Transverse colon (tissue), 4 donors: ENCODE measurements at regions of chr4 and their contacts with region 1.

Region 1: DNA sequence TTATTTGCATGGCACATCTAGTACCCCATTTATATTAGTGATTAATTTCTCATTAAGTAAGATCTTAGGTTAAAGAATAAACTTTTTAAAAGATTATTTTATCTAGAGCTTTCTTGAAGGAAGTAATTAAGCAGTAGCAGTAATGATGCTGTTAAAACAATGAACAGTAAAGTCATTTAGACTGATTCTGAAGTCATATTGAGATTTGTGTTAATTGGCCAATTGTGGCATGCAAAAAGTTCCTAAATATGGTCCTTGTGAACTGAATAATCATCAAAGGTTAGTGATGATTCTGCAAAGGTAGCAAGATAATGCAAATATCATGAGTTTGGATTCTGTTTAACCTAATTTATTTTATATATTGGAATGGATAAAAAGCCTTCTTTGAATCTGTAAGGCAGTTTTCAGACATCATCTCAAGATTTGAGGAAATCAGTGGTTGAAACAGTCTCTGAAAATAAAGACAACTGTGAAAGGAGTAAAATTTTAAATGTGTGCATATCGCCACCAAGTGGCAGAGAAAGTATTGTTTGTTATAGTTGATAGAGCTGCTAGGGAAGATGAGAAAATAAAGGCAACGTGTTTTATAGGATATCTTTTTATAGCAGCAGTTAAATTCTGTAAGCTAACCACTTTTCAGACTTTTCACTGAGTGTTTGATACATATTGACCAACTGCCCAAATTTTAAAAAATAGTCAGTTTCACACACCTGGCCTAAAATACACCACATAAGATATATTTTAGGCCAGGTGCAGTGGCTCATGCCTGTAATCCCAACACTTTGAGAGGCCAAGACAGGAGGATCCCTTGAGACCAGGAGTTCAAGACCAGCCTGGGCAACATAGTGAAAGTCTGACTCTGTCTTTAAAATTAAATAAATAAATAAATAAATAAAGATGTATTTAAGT is 79.6 kb downstream of the CCKAR start:
- DNase-seq: no peak
- H3K4me3 ChIP-seq: no peak overlapping the region
- H3K27ac ChIP-seq: peak overlapping the region in 1 of 4 donors; percentile 17
- H3K4me1 ChIP-seq: peaks cover 0 to 8% (median 1%) of the 10 kb centered on the region in 4 donors
- H3K27me3 ChIP-seq: no peaks in the 10 kb centered on the region
- CTCF ChIP-seq: peak; percentile 56 to 76 (median 58)
- EP300 ChIP-seq: no peak
- POLR2A ChIP-seq: no peak

Region 2: GRCh38 chr4:25993395-25994185 is 417.0 kb before region 1 on chr4:
- in situ Hi-C with region 1: loop called in 1 of 4 experiments (anchors 25 kb)
- intact Hi-C with region 1: loop called (anchors 10 kb)
- DNase-seq: peak; percentile 28
- H3K4me3 ChIP-seq: no peak overlapping the region
- H3K27ac ChIP-seq: no peak overlapping the region
- H3K4me1 ChIP-seq: no peaks in the 10 kb centered on the region
- H3K27me3 ChIP-seq: no peaks in the 10 kb centered on the region
- CTCF ChIP-seq: peak in 1 of 5 experiments; percentile 14
- EP300 ChIP-seq: no peak
- POLR2A ChIP-seq: no peak

Region 3: DNA sequence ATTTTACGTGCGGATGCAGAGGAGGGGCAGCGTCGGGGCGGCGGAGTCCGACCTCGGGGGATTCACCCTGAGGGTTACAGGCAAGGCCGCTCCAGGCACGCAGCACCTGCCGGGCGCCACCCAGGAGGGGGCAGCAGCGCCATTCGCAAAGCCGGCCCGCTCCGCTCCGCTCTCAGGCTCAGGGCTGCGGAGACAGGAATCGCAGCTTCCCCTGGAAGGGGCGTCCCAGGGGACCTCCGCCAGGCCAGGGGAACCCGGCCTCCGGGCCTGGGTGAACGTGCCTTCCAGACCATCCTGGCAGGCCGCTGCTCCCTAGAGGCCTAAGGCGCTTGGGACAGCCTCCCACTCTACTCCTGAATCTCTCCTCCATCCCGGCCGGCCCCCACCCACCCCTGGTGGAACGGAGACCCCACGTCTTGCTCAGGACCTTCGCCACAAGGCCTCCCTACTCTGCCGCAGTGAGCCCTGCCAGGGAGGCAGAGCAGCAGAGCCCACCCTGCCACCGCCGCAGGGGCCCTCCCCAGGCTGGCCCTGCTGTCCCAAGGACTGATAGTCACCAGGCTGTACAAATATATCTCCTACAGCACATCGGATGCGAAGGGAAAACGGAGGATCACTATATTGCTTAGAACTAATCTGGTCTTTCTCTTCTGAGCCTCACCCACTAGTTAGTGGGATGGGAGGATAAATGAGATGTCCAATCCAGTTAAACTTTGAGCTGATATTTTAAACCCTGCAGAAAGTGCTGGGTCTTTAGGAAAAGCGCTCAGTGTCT is 381.7 kb before region 1 on chr4:
- in situ Hi-C with region 1: no loop called
- intact Hi-C with region 1: loop called (anchors 5 kb)
- DNase-seq: peak; percentile 71
- H3K4me3 ChIP-seq: peak overlapping the region in 1 of 4 donors; percentile 20
- H3K27ac ChIP-seq: peak overlapping the region in 2 of 4 donors; percentile 2 to 3
- H3K4me1 ChIP-seq: peaks cover 0 to 12% (median 3%) of the 10 kb centered on the region in 4 donors
- H3K27me3 ChIP-seq: no peaks in the 10 kb centered on the region
- CTCF ChIP-seq: peak; percentile 57 to 75 (median 71)
- EP300 ChIP-seq: no peak
- POLR2A ChIP-seq: no peak

Region 4: DNA sequence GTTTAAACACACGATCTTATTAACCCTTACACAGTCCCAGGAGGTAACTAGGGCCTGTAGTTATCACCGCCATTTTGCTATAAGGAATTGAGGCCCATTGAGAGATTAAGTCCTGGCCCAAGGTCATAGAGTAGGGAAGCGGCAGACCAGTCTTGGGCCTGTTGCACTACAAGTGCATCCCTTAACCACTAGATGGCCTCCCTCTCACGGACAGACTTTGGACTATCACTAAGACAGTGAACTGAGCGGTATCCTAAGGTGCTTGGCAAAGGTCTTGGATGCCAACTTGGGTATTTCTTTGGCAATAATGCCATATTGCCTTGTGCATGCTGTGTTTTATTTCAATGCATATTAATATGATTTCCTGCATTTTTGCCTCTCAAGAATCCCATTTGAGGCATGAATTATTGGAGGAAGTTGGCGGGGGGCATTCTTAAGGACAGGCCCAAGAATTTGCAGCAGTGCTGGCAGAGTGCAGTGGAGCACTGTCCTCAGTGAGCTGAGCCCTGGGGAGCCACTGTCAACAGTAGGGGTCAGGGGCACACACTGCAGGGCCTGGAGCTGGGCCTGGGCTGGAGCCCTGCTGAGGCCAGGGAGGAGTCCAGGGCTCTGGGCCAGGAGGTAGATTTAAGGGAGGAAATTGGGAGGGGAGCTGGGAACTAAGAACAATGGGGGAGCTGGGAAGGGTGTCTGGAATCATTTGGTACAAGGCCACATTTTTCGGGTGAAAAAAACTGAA is 349.2 kb before region 1 on chr4:
- in situ Hi-C with region 1: loop called in 1 of 4 experiments (anchors 25 kb)
- intact Hi-C with region 1: no loop called
- DNase-seq: no peak
- H3K4me3 ChIP-seq: no peak overlapping the region
- H3K27ac ChIP-seq: no peak overlapping the region
- H3K4me1 ChIP-seq: no peaks in the 10 kb centered on the region
- H3K27me3 ChIP-seq: no peaks in the 10 kb centered on the region
- CTCF ChIP-seq: peak; percentile 33 to 48 (median 44)
- EP300 ChIP-seq: no peak
- POLR2A ChIP-seq: no peak

Region 5: DNA sequence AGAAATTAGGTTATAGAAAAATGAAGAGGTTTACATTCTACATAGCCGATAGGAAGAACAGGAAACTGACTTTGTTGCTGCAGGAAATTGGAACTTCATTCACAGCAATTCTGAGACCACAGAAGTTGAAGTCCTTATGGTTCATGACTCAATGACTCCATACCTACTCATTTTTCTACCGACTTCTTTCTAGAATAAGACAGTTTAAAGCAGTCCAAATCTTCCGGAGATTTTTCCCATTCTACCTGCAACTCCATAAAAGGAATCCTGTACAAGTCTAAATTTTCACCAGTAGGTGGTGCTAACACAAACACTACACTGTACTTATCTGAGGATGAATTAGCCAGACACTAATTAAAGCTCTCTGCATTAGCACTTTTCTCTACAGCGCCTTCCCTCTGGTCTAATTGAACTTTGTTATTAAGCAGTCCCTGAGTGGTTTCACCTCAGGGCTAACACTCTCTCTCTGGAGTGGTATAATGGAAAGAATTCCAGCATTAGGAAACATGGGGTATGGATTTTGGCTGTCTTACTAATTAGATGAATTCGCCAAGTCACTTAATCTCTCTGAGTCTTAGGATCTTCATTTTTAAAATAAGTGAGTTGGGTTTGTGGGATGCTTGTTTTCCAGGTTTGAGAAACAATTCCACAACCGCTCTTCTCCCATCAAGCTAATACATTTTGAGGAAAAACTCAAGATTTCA is 328.7 kb before region 1 on chr4:
- in situ Hi-C with region 1: loop called in 2 of 4 experiments (anchors 5 to 25 kb)
- intact Hi-C with region 1: no loop called
- DNase-seq: no peak
- H3K4me3 ChIP-seq: no peak overlapping the region
- H3K27ac ChIP-seq: no peak overlapping the region
- H3K4me1 ChIP-seq: peaks cover 0 to 9% (median 3%) of the 10 kb centered on the region in 4 donors
- H3K27me3 ChIP-seq: no peaks in the 10 kb centered on the region
- CTCF ChIP-seq: peak; percentile 65 to 79 (median 73)
- EP300 ChIP-seq: no peak
- POLR2A ChIP-seq: no peak

Region 6: GRCh38 chr4:26330186-26330787 is 80.4 kb before region 1 on chr4:
- in situ Hi-C with region 1: loop called in 1 of 4 experiments (anchors 10 kb)
- intact Hi-C with region 1: loop called (anchors 10 kb)
- DNase-seq: no peak
- H3K4me3 ChIP-seq: no peak overlapping the region
- H3K27ac ChIP-seq: no peak overlapping the region
- H3K4me1 ChIP-seq: peaks cover 4 to 48% (median 17%) of the 10 kb centered on the region in 4 donors
- H3K27me3 ChIP-seq: no peaks in the 10 kb centered on the region
- CTCF ChIP-seq: peak; percentile 64 to 76 (median 72)
- EP300 ChIP-seq: no peak
- POLR2A ChIP-seq: no peak